ENCODE measurements at regions of chr1 and their contacts with region 1.

Region 1: DNA sequence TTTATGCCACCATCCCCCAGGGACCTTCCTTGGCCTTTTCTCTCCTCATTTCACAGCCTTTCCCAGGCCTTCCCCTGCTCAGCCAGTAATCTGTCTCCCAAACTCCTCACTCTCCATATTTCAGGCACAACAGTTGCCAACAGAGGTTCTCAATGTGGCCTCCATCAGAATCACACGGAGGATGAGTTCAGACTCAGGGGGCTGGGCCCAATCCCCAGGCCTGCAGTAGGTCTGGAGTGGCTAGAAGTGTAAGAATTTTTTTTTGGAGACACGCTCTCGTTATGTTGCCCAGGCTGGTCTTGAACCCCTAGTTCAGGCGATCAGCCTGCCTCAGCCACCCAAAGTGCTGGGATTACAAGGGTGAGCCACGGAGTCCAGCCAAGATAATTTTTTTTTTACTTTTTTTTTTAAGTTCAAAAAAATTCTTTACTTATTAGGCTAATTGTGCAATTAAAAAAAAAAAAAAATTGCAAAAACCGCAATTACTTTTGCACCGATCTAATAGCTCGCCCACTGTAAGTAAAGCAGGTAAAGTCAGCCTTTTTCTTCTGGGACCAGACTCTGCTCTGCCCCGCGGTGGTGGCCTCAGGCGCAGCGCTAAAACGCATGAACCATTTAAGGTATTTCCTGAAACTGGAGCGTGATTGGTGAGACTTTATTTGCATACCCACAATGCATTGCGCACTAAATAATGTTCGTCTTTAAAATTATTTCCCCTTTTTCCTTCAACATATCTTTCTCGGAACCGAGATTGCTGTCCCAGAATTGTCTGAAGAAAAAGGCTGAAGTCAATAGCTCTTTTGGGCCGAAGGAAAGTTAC is 18.7 kb downstream of the KIAA2013 start:
- DNase-seq: peak; percentile 91 to 97 (median 96)
- ATAC-seq: peak; percentile 88 to 89
- H3K4me3 ChIP-seq: no peak overlapping the region
- H3K27ac ChIP-seq: peak overlapping the region; percentile 95
- H3K4me1 ChIP-seq: no peaks in the 10 kb centered on the region
- H3K27me3 ChIP-seq: no peaks in the 10 kb centered on the region

Region 2: DNA sequence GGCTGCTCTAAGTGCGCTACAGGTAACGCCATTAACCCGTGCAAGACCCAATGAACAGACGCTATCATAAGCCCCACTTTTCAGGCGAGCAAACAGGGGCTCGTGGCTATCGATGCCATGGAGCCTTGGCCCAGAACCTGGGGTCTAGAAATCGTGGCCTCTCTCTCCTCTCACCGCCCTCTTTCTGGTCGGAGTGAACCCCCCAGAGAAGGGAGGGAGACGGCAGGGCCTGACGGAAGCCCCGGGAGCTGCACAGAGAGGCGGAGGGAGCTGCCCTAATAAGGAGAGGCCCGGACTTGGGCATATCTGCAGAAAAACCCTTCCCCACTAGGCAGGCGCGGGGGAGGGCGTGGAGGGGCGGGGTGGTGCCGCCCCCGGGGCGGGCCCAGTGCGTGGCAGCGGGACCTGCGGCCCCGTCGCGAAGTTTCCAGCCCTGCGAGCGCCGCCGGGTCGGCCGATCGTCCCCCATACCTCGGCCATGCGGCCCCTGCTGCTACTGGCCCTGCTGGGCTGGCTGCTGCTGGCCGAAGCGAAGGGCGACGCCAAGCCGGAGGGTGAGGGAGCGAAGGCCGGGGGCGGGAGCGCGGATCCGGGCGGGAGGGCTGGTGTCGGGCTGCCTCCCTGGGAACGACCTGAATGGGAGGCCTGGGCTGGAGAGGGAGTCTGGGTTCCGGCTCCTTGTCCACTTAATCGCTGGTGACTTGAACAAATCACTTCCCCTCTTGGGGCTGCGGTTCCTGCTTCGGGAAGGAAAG is 27.0 kb after region 1 on chr1 and contains the start of gene PLOD1:
- intact Hi-C with region 1: loop called in 1 of 4 experiments (anchors 2 kb)
- DNase-seq: peak; percentile 92 to 98 (median 97)
- ATAC-seq: peak; percentile 95 to 97
- H3K4me3 ChIP-seq: peak within 1 kb of the TSS; percentile 60
- H3K27ac ChIP-seq: peak within 1 kb of the TSS; percentile 95
- H3K4me1 ChIP-seq: peaks cover 13% of the 10 kb centered on the region
- H3K27me3 ChIP-seq: no peaks in the 10 kb centered on the region
- total RNA-seq, gene PLOD1: 49.5 to 77.8 (median 63.1) TPM

Region 3: DNA sequence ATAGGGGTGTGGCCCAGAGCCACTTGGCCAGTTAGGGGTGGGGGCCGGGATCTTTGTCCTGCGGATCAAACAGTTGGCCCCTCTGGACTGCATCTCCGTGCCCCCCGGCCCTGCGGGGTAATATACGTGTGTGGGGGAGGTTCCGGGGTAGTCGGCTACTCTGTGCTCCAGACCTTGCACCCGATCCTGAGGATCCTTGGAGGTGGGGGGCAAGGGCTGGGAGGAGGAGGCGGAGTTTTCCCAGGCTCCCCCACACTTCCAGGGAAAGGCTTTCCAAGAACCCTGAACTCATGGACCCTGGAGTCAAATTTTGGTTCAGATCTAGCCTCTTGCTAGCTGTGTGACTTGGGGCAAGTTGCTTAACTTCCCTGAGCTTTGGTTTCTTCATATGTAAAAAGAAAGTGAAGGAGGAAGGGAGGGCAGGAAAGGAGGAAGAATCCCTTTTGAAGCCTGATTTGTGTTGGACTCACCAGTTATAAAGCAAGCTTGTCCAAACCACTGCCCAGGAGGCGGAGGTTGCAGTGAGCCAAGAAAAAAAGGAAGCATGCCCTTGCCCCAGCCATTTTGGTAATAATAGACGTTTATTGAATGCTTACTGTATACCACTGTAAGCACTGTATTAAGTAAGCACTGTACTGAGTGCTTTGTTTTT is 112.5 kb after region 1 on chr1:
- intact Hi-C with region 1: loop called in 1 of 4 experiments (anchors 10 kb)
- DNase-seq: peak in 1 of 3 donors; percentile 40
- ATAC-seq: peak; percentile 5 to 17
- H3K4me3 ChIP-seq: peak overlapping the region; percentile 76
- H3K27ac ChIP-seq: peak overlapping the region; percentile 15
- H3K4me1 ChIP-seq: peaks cover 1% of the 10 kb centered on the region
- H3K27me3 ChIP-seq: no peaks in the 10 kb centered on the region

Region 4: DNA sequence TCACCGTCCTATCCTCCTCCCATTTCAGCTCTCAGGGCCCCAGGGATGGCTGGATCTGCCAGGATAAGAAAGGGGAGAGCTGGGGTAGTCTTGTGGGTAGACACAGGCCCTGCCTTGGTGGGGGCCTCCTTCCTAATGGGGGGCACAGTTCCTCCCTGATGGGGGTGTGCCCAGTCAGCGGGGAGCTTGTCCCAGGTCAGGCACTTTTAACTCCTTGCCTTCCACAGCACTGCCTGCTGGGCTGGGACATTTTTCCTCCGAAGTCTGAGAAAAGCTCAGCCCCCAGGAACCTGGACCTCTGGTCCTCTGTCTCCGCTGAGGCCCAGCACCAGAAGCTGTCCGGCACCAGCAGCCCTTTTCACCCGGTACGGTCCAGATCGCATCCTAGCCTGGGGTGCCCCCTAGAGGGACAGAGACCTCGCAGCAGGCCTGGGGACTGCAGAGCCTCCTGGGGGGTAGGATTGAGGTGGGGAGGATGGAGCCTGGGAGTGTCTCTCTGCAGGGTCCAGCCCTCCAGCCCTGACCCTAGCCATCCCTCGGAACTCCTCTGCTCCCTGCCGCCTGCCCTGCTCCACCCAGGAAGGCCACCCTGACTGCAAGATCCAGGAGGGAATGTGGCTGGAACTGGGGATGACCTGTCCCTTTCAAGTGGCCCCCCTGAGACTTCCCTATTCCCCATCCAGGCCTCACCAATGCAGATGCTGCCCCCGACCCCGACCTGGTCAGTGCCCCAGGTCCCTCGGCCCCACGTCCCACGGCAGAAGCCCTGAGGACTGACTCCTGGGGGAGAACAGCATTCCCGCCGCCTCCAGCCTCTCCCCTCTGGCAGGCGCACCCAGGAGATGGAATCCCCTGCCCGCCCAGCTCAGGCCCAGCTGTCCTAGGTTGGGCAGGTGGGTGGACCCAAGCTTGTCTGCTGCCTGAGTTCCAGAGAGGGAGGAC is 123.8 kb after region 1 on chr1:
- intact Hi-C with region 1: loop called in 1 of 4 experiments (anchors 5 kb)
- DNase-seq: peak in 2 of 3 donors; percentile 66 to 67
- ATAC-seq: peak; percentile 57
- H3K4me3 ChIP-seq: no peak overlapping the region
- H3K27ac ChIP-seq: no peak overlapping the region
- H3K4me1 ChIP-seq: no peaks in the 10 kb centered on the region
- H3K27me3 ChIP-seq: no peaks in the 10 kb centered on the region

Measured in right cardiac atrium (tissue), 5 donors.